ENCODE measurements at regions of chr4 and their contacts with region 1.

Region 1: DNA sequence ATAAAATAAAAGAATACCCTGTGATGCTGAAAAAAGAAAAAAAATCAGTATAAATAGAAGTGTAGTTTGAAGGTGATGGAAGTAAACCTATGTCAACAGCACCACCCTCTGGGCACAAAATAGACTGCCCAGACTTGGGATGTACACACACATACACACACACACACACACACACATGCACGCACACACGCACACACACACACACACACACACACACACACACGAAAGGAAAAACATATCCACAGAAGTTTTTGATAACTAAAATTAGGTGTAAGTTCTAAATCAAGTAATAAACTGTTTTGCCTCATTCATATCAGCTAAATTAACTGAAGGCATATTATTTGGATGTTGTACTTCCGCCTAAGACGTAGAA is 40.5 kb downstream of the ANXA5 start:
- DNase-seq: peak in 1 of 2 experiments; percentile 5
- H3K4me3 ChIP-seq: no peak overlapping the region
- H3K27ac ChIP-seq: no peak overlapping the region
- H3K4me1 ChIP-seq: no peaks in the 10 kb centered on the region
- H3K27me3 ChIP-seq: no peaks in the 10 kb centered on the region
- CTCF ChIP-seq: peak; percentile 70

Region 2: DNA sequence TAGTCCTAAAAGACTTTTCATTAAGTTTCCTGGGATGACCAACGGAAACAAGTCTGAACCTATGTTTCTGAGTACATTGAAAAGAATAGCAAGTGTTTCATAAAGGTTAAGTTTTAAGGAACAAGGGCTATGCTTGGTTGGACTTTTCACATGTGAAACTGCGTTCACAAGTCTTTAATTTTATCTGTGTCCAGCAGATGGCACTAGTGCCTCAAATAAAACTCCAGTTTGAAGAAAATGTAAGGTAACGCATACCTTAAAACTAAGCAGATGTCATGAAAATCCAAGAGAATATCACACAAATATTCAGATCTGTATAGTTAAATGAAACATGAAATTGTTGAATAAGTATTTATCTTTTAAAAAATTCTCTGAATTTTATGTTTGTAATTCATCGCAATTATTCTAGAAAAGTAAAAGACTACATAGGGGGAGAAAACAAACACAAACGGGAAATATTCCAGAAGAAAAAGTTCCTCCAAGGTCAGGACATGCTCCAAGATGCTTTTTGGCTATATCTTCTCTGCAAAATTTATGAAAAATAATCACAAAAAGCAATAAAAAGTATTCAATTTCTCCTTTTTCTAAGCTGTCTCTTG is 1500.0 kb before region 1 on chr4:
- CTCF ChIA-PET with region 1: no interaction called
- POLR2A ChIA-PET with region 1: no interaction called
- intact Hi-C with region 1: loop called (anchors 5 kb)
- DNase-seq: peak; percentile 12 to 41
- H3K4me3 ChIP-seq: no peak overlapping the region
- H3K27ac ChIP-seq: no peak overlapping the region
- H3K4me1 ChIP-seq: no peaks in the 10 kb centered on the region
- H3K27me3 ChIP-seq: no peaks in the 10 kb centered on the region
- CTCF ChIP-seq: peak; percentile 87

Region 3: DNA sequence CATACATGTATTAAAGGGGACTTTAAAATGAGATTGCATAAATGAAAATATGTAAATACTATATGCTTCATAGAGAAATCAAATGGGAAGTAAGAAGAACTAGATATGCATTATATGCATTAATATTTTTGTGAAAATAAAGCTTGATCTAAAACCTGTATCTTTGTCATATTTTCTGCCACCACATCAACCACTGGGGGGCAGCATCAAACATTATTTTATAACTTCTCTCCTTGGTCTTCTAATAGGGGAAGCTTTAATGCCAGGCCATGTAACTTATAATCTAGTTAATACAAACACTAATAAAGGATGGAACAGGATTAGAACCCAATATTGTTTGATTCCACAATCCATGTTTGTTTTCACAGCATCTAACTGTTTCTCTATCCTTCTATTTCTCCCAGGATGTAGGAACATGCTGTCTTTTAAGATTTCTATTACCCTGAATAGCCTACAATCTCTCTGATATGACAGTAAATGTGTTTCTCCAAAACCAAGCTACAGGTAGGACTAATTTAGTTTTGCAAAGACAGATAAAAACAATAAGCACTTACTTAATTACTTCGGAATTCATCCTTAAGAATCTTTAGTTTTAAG is 285.4 kb before region 1 on chr4:
- CTCF ChIA-PET with region 1: no interaction called
- POLR2A ChIA-PET with region 1: no interaction called
- intact Hi-C with region 1: loop called (anchors 2 kb)
- DNase-seq: peak in 1 of 2 experiments; percentile 33
- H3K4me3 ChIP-seq: no peak overlapping the region
- H3K27ac ChIP-seq: no peak overlapping the region
- H3K4me1 ChIP-seq: peaks cover 8% of the 10 kb centered on the region; the same call in 1 of the 2 replicates
- H3K27me3 ChIP-seq: no peaks in the 10 kb centered on the region
- CTCF ChIP-seq: peak; percentile 83

Region 4: GRCh38 chr4:121462660-121463261 is 193.5 kb before region 1 on chr4:
- CTCF ChIA-PET with region 1: no interaction called
- POLR2A ChIA-PET with region 1: interaction called, 5 read pairs
- intact Hi-C with region 1: loop called (anchors 5 kb)
- DNase-seq: peak; percentile 25 to 41
- H3K4me3 ChIP-seq: no peak overlapping the region
- H3K27ac ChIP-seq: no peak overlapping the region
- H3K4me1 ChIP-seq: no peaks in the 10 kb centered on the region
- H3K27me3 ChIP-seq: no peaks in the 10 kb centered on the region
- CTCF ChIP-seq: peak; percentile 76

Measured in PC-9 (cell line).